Motor neuron (in vitro differentiated cells): ENCODE measurements at regions of chr4 and their contacts with region 1.

Region 1: GRCh38 chr4:101724093-101724492 is 66.4 kb upstream of the BANK1 start:
- ATAC-seq: no peak
- H3K4me3 ChIP-seq: no peak overlapping the region
- H3K27ac ChIP-seq: no peak overlapping the region
- H3K4me1 ChIP-seq: no peaks in the 10 kb centered on the region

Region 2: DNA sequence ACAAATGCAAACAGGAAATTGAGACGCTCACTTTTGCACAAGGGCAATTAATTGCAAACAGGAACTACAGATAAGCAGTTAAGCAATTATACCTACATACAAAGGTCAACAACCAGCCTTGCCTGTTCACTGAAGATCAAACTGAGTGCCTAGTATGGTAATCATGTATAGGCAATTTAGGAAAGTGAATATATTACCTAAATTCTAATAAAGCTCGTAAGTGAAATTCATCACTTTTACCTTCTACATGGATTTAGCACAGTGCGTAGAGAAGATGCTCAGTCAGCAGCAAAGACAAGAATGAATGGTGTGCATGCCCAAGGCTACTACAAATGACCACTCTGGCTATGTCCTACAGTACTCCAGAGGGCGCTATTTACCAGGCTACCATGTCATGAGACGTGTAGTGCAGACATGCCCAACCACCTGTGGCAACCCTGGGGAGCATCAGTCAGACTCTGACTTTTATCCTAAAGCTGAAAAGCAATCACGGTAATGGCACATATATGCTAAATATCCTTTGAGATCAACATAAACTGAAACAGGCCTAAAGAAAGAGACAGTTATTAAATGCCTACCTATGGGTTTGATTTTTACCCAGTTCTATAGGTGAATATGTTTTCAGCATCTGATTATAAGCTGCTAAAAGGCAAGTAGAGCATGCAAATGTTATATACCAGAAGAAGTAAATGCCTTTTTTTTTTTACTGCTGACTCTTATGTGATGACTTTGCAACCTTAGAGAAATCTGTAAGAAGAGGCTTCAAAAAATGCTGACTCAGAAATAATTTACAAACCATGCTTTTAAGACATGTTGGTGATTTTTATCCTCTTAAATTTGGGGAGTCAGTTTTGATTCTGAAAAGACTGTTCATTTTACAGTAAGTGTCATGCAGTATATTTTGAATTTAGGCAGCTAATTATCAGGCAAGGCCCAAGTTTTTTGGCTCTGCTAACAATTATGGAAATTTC is 554.8 kb before region 1 on chr4:
- in situ Hi-C with region 1: loop called in 1 of 9 experiments (anchors 25 kb)
- ATAC-seq: peak; percentile 56 to 99 (median 84)
- H3K4me3 ChIP-seq: no peak overlapping the region
- H3K27ac ChIP-seq: no peak overlapping the region
- H3K4me1 ChIP-seq: no peaks in the 10 kb centered on the region

Region 3: DNA sequence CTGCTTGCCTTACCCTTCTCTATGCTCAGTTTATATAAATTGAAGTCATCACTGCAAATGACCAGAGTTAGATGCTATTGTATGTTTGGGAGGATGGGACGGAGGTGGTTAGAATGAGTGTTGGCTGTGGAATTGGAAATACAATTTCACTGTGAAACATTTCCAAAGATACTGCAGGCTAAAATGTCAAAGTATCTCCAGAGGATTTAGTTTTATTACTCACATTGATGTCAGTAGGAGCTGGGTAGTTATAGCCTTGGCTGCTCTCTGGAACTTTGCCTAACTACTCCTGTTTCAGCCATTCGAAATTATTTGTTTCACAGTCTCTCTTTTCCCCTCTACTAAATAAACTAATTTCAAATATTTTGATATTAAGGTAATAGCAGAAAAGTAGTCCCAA is 284.2 kb before region 1 on chr4:
- in situ Hi-C with region 1: no loop called
- ATAC-seq: no peak
- H3K4me3 ChIP-seq: no peak overlapping the region
- H3K27ac ChIP-seq: no peak overlapping the region
- H3K4me1 ChIP-seq: no peaks in the 10 kb centered on the region

Region 4: GRCh38 chr4:102344954-102345794 is 621.1 kb after region 1 on chr4 and contains the start of gene SLC39A8:
- in situ Hi-C with region 1: no loop called
- ATAC-seq: peak; percentile 74 to 87 (median 83)
- H3K4me3 ChIP-seq: peak within 1 kb of the TSS; percentile 31 to 40 (median 39)
- H3K27ac ChIP-seq: no peak within 1 kb of the TSS
- H3K4me1 ChIP-seq: peaks cover 2 to 7% of the 10 kb centered on the region in 2 donors
- total RNA-seq, gene SLC39A8: 1.2 to 235 (median 3.0) TPM